Adrenal gland (tissue), 19 donors: ENCODE measurements at regions of chr1 and their contacts with region 1.

Region 1: GRCh38 chr1:110203021-110203661 is 7.0 kb upstream of the KCNC4 start:
- DNase-seq: peak; percentile 56 to 84 (median 70)
- H3K4me3 ChIP-seq: no peak overlapping the region
- H3K27ac ChIP-seq: peak overlapping the region in 2 of 5 donors; percentile 24 to 38
- H3K4me1 ChIP-seq: peaks cover 0 to 5% of the 10 kb centered on the region in 2 donors
- H3K27me3 ChIP-seq: no peaks in the 10 kb centered on the region
- CTCF ChIP-seq: peak; percentile 86 to 92 (median 87)
- POLR2A ChIP-seq: no peak

Region 2: DNA sequence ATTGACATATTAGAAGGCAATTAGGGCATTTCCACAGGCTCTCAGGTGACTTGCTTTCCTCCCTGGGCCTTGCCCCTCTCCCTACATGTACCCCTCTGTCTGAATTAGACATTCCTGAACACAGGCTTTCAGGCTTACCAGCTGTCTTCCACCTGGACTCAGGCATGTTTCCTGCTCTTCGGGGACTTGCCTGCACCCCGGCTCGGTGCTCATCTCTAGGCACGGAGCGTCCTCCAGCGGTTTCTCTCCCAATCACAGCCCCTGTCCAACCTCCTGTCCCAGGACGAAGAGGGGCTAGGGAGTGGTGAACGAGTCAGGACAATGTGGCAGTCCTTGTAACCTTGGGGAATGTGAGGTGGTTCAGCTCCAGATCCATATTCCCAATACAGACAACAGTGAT is 252.0 kb after region 1 on chr1:
- intact Hi-C with region 1: loop called (anchors 2 to 5 kb)
- DNase-seq: no peak
- H3K4me3 ChIP-seq: no peak overlapping the region
- H3K27ac ChIP-seq: no peak overlapping the region
- H3K4me1 ChIP-seq: no peaks in the 10 kb centered on the region
- H3K27me3 ChIP-seq: no peaks in the 10 kb centered on the region
- CTCF ChIP-seq: no peak
- POLR2A ChIP-seq: no peak

Region 3: DNA sequence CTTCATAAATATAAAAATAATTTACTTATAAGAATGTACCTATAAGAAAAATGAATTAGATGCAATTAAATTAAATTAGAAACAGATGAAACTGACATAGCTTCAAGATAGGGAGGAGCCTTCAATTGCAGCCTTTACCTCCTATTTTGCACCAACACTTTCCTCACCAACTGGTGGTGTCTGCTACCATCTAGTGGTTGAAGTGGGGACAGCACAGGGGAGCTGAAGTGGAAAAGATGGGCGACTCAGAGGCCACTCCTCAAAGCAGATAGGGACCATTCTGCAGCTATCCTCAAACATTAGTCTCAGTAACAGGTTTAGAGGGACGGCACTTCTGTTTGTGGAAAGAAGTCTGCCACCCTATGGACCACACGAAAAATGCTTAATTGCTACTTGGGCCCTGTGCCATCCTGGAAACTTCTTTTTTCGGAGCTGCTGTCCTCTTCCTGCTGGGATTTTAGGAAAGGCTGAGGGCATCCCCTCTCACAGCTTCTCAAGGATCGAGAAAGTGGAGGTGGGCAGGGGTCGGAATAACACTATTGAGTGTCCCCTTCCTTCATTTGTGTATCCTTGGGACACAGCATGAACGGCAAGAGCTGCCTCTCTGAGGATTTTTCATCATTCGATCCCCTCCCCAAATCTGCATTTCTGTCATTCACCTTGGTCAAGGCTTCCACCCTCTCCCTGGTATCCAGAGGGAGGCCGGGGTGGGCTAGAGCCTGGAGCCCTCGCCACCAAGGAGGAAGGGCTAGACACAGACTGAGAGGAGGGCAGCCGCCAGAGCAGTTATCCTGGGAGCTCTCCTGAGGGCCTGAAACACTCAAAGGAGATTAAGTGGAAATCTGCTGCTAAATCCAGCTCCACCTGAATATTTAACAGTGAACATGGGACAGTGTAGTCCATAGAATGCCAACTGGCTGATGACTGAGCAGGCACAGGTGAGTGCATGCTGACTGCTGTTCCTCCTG is 257.4 kb after region 1 on chr1:
- intact Hi-C with region 1: loop called (anchors 2 to 5 kb)
- DNase-seq: peak; percentile 66 to 94 (median 85)
- H3K4me3 ChIP-seq: no peak overlapping the region
- H3K27ac ChIP-seq: no peak overlapping the region
- H3K4me1 ChIP-seq: no peaks in the 10 kb centered on the region
- H3K27me3 ChIP-seq: no peaks in the 10 kb centered on the region
- CTCF ChIP-seq: peak; percentile 92 to 99 (median 98)
- POLR2A ChIP-seq: no peak